ENCODE measurements at regions of chr5 and their contacts with region 1.

Region 1: DNA sequence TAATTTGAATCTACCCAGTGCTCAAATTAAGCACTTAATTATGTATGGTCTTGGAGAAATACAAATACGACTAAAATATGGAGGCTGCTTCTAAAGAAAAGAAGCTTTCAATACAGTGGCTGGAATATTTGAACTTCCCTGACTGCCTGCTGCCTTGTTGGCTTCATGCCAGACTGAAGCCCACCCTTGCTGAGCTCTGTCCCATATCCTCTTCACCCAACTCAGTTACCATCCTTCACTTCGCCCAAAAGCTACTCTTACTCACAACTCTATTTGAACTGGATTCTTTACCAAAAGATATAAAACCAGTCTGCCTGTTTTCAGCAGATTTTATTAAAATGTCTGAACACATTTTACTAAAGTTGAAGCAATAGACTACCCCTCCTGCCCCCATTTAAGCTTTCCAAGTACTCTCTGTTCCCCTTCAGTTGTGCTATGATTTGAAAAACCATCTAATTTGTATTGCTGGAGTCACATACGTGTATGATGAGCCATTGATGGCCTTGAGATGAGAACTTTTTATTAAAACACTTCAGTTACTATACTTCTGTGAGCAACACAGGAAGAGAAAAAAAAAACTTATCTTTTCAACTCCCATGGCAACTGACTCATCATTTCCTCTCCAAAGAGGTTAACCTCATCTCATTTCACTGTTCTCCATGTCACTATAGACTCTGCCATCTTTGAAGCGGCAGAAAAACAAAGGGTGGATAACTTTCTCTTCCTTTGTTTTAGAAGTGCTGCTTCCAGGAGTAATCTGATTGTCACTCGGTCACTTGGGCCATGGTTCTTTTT is 104.1 kb upstream of the PCSK1 start:
- DNase-seq: peak; percentile 83
- H3K4me3 Mint-ChIP-seq: peak overlapping the region; percentile 56
- H3K27ac Mint-ChIP-seq: peak overlapping the region; percentile 85
- H3K4me1 Mint-ChIP-seq: peaks cover 27% of the 10 kb centered on the region
- H3K27me3 Mint-ChIP-seq: peaks cover 7% of the 10 kb centered on the region

Region 2: GRCh38 chr5:95591490-95591901 is 945.7 kb before region 1 on chr5:
- intact Hi-C with region 1: loop called (anchors 1 kb)
- DNase-seq: no peak
- H3K4me3 Mint-ChIP-seq: no peak overlapping the region
- H3K27ac Mint-ChIP-seq: peak overlapping the region; percentile 39
- H3K4me1 Mint-ChIP-seq: peaks cover 20% of the 10 kb centered on the region
- H3K27me3 Mint-ChIP-seq: no peaks in the 10 kb centered on the region

Region 3: GRCh38 chr5:96113170-96113939 is 423.8 kb before region 1 on chr5:
- intact Hi-C with region 1: loop called (anchors 1 kb)
- DNase-seq: peak; percentile 59
- H3K4me3 Mint-ChIP-seq: no peak overlapping the region
- H3K27ac Mint-ChIP-seq: peak overlapping the region; percentile 76
- H3K4me1 Mint-ChIP-seq: peaks cover 11% of the 10 kb centered on the region
- H3K27me3 Mint-ChIP-seq: no peaks in the 10 kb centered on the region

Region 4: DNA sequence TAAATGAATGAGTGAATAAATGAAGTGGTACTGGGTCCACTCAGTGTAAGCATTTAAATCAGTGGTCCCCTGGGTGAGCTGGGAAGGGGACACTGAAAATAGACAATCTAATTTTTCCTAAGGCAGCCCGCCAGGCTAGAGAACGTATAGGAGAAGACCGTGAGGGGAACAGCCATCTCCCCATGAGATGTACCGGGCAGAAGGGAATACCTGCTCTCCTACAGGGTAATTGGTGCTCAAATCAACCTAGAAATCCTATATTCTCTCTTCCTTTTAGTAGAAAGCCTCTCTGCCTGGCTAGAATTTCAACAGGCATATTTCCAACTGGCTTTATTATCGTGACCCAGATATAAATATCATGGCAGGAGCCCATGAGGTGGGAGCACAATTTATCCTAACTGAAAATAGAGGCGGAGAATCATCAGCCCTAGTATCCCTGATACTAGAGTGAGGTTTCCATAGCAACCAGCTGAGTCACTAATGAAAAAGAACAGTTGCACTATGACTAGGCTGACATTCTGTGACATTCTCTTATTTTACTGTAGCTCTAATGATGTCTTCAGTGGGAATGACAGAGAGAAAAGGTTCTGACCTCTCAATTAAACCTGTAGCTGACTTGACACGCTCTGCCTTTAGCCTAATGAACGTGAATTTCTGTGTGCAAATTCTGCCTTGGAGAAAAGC is 28.5 kb after region 1 on chr5:
- intact Hi-C with region 1: loop called (anchors 1 kb)
- DNase-seq: no peak
- H3K4me3 Mint-ChIP-seq: peak overlapping the region; percentile 11
- H3K27ac Mint-ChIP-seq: no peak overlapping the region
- H3K4me1 Mint-ChIP-seq: peaks cover 14% of the 10 kb centered on the region
- H3K27me3 Mint-ChIP-seq: peaks cover 13% of the 10 kb centered on the region

Region 5: DNA sequence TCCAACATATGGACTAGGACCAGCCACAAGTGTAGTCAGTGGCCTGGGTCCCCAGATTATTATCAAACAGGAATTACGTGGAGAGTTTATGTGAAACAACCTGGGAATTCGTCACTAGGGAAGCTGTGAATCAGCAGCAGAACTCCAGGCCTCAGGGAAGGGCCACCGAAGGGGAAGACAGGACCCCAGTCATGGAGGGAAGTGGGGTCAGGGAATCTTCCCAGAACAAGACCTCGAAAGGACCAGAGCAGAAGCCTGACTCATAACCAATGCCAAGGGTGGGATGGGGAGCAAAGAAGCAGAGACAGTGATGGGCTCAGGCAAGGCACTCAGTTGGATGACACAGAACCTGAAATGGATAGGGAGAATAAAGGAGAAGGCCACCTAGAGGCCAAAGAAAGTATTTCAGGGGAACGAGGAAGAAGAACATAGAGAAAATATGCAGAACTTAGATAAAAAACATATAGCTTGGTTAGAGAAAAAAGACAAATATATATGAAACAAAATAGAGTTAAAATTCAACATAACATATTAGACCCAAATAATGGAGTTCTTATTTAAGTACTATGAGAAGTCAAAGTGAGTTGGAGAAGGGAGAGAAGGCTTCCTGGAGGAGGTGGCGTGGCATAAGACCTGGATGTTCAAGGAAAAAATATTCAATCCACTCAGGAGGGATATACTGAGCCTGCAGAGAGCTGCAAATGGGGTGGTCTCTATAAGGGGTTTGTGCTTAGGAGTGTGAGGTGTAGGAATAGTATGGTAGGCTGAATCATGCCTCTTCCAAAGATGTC is 58.3 kb after region 1 on chr5:
- intact Hi-C with region 1: loop called (anchors 1 kb)
- DNase-seq: peak; percentile 69
- H3K4me3 Mint-ChIP-seq: no peak overlapping the region
- H3K27ac Mint-ChIP-seq: no peak overlapping the region
- H3K4me1 Mint-ChIP-seq: peaks cover 8% of the 10 kb centered on the region
- H3K27me3 Mint-ChIP-seq: peaks cover 31% of the 10 kb centered on the region

Region 6: GRCh38 chr5:96662725-96663513 is 125.7 kb after region 1 on chr5:
- intact Hi-C with region 1: loop called (anchors 1 kb)
- DNase-seq: peak; percentile 96
- H3K4me3 Mint-ChIP-seq: peak overlapping the region; percentile 99
- H3K27ac Mint-ChIP-seq: peak overlapping the region; percentile 99
- H3K4me1 Mint-ChIP-seq: peaks cover 49% of the 10 kb centered on the region
- H3K27me3 Mint-ChIP-seq: peaks cover 12% of the 10 kb centered on the region

Measured in activated CD4-positive, alpha-beta T cell treated with anti-CD3 and anti-CD28 coated beads, Interleukin-2, amount 10 ng/mL, durations not matched to agents 24 days and 14 days (primary cell).